A673 (cell line): ENCODE measurements at regions of chr14 and their contacts with region 1.

Region 1: GRCh38 chr14:68286667-68287066 is 467.1 kb downstream of the RAD51B start:
- DNase-seq: no peak
- H3K4me3 ChIP-seq: no peak overlapping the region
- H3K27ac ChIP-seq: no peak overlapping the region
- H3K4me1 ChIP-seq: no peaks in the 10 kb centered on the region
- H3K27me3 ChIP-seq: no peaks in the 10 kb centered on the region
- CTCF ChIP-seq: no peak

Region 2: DNA sequence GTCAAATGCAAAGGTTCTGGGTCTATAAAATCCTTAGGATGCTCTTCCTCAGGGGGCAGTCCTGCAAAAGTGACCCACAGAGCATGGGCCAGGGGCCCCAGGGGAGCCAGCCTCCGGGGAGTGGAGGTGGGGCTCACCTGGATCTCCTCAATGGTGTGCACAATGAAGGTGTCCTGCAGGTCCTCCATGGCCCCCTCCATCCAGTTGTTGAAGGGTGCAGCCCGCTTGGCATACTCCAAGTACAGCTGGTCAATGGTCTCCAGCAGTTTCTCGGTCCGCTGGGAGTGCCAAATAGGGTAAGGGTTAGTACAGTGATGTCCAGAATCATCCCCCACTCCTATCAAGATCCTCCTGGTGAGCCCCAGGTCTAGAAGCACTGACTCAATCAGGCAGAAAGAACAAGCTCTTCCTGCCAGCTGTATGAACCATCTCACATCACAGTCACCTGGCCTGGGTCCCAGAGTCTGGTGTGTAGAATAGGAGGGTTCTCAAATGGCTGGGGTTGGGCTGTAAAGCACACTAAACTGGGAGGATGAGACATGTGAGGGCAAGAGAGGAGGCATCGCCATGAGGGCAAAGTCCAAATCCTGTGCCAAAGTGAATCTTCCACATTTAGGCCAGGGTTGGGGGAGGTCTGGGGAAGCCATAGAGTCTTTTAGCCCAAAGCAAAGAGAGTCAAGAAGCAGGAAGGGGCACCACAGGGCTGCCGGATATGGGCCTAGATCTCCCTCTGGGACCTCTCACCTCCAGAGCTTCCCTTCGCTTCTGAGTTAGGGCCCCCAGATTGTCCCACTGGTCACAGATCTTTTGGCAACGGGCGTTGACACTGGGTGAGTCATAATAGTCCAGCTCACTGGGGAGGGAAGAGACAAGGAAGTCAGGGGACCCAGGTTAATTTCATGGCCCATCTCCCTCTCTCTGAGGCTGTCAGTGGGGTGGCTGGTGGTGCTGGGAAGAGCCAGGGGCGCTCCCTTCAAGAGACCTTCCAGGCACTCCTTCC is 597.7 kb after region 1 on chr14:
- CTCF ChIA-PET with region 1: no interaction called
- POLR2A ChIA-PET with region 1: no interaction called
- intact Hi-C with region 1: no loop called
- DNase-seq: no peak
- H3K4me3 ChIP-seq: no peak overlapping the region
- H3K27ac ChIP-seq: no peak overlapping the region
- H3K4me1 ChIP-seq: no peaks in the 10 kb centered on the region
- H3K27me3 ChIP-seq: no peaks in the 10 kb centered on the region
- CTCF ChIP-seq: no peak

Region 3: GRCh38 chr14:69356889-69357507 is 1070.3 kb after region 1 on chr14:
- CTCF ChIA-PET with region 1: no interaction called
- POLR2A ChIA-PET with region 1: interaction called, 12 read pairs
- intact Hi-C with region 1: no loop called
- DNase-seq: no peak
- H3K4me3 ChIP-seq: no peak overlapping the region
- H3K27ac ChIP-seq: no peak overlapping the region
- H3K4me1 ChIP-seq: no peaks in the 10 kb centered on the region
- H3K27me3 ChIP-seq: no peaks in the 10 kb centered on the region
- CTCF ChIP-seq: no peak